Dorsolateral prefrontal cortex (tissue), 120 donors: ENCODE measurements at regions of chr1 and their contacts with region 1.

Region 1: GRCh38 chr1:221598122-221598521 is 143.8 kb downstream of the DUSP10 start:
- DNase-seq: peak in 2 of 10 donors; percentile 39 to 56
- H3K4me3 ChIP-seq: peak overlapping the region in 4 of 59 donors; percentile 3 to 14 (median 7)
- H3K27ac ChIP-seq: peak overlapping the region in 54 of 59 donors; percentile 10 to 88 (median 68)
- H3K27me3 ChIP-seq: no peaks in the 10 kb centered on the region
- CTCF ChIP-seq: peak in 5 of 56 donors; percentile 13 to 32 (median 17)

Region 2: GRCh38 chr1:221637641-221638041 is 39.5 kb after region 1 on chr1:
- intact Hi-C with region 1: loop called in 1 of 2 experiments (anchors 2 kb)
- DNase-seq: peak in 3 of 10 donors; percentile 29 to 36 (median 34)
- H3K4me3 ChIP-seq: no peak overlapping the region
- H3K27ac ChIP-seq: peak overlapping the region in 2 of 59 donors; percentile 21 to 25
- H3K27me3 ChIP-seq: peaks cover 0 to 3% (median 0%) of the 10 kb centered on the region in 45 donors
- CTCF ChIP-seq: peak in 26 of 56 donors; percentile 8 to 46 (median 26)

Region 3: GRCh38 chr1:221858818-221859611 is 260.9 kb after region 1 on chr1:
- intact Hi-C with region 1: no loop called
- DNase-seq: no peak
- H3K4me3 ChIP-seq: no peak overlapping the region
- H3K27ac ChIP-seq: no peak overlapping the region
- H3K27me3 ChIP-seq: no peaks in the 10 kb centered on the region
- CTCF ChIP-seq: no peak